AG04449 (cell line): ENCODE measurements at regions of chr6 and their contacts with region 1.

Region 1: DNA sequence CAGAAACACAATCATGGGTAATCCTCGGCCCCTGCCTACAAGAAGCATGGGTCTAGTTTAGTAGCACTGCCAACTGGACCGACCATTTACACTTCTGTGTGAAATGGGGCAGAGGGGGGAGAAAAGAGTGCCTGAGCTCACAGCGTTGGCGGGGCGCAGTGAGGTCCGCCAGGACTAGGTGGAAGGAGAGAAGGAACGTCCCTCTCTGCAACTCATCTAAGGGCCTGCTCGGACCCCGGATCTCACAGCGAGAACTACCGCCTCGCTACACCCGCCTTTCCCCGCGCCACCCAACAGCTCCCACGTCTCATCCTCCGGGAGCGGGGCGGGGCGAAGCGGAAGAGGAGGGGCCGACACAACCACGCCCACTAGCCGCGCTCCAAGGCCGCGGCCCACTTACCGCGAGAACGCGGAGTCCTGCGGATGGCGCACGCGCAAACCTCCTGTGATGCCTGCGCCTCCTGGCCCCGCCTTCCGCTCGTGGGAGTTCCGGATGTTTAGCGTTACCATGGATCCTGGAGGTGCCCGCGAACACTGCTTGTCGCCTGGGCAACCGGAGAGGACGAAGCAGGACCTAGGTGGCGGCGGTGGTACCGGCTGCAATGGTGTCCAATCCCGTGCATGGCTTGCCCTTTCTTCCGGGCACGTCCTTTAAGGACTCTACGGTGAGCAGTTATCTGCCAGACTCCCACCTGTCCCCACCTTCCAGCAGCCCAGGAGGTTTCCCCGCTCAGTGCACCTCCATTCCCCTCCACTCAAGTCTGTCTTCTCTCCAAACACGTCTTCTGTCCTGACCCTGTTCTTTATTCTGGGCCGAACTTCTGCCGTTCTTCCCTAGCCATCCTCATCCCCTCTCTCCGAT is at the start of gene EFHC1:
- DNase-seq: peak; percentile 79
- H3K4me3 ChIP-seq: peak within 1 kb of the TSS; percentile 74
- CTCF ChIP-seq: no peak

Region 2: DNA sequence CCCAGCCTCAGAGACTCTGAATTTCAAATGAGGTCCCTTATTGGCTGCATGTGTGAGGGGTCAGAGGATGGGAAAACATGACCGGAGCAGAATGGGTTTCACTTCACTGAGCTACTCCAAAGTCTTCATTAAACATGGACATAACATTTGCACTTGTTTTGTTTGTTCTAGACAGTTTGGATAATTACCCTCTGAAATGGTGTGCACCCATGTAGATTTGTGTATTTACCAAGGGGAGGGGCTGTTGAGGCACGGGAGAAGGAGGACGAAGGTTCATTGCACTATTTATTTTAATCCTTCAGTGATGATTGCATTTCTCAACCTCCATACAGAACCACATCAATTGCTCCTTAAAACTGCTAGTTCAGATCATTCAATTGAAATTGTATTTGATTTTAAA is 1237.2 kb before region 1 on chr6:
- CTCF ChIA-PET with region 1: no interaction called
- POLR2A ChIA-PET with region 1: no interaction called
- DNase-seq: no peak
- H3K4me3 ChIP-seq: no peak overlapping the region
- CTCF ChIP-seq: no peak

Region 3: DNA sequence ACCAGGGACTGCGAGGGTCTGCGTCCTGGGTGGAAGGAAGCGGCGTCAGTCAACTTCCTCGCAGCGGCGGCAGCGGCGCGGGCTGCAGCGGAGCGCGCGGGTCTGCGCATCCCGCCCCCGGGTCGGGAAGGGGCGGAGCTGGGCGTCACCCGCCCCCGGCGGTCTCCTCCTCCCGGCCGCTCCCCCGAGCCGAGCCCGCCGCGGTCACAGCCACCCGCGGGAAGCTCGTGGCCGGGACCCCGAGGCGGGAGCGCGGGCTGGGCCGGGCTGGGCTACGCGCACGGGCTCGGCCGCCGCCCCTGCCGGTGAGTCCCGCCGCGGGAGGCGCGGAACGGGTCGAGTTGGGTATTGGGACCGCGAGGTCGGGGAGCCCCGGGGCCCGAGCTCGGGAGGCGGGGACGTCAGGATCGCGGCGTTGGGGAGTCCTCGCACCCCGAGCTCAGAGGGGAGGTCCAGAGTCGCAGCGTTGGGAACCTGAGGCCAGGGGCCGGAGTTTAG is 58.0 kb before region 1 on chr6 and contains the start of gene PAQR8:
- CTCF ChIA-PET with region 1: no interaction called
- POLR2A ChIA-PET with region 1: no interaction called
- DNase-seq: no peak
- H3K4me3 ChIP-seq: peak within 1 kb of the TSS; percentile 78
- CTCF ChIP-seq: no peak

Region 4: GRCh38 chr6:52399511-52400312 is 20.3 kb before region 1 on chr6:
- CTCF ChIA-PET with region 1: interaction called, 61 read pairs
- POLR2A ChIA-PET with region 1: no interaction called
- DNase-seq: no peak
- H3K4me3 ChIP-seq: no peak overlapping the region
- CTCF ChIP-seq: peak; percentile 76

Region 5: GRCh38 chr6:52493669-52494068 is 73.6 kb after region 1 on chr6:
- CTCF ChIA-PET with region 1: interaction called, 11 read pairs
- POLR2A ChIA-PET with region 1: interaction called, 3 read pairs
- DNase-seq: no peak
- H3K4me3 ChIP-seq: no peak overlapping the region
- CTCF ChIP-seq: no peak

Region 6: DNA sequence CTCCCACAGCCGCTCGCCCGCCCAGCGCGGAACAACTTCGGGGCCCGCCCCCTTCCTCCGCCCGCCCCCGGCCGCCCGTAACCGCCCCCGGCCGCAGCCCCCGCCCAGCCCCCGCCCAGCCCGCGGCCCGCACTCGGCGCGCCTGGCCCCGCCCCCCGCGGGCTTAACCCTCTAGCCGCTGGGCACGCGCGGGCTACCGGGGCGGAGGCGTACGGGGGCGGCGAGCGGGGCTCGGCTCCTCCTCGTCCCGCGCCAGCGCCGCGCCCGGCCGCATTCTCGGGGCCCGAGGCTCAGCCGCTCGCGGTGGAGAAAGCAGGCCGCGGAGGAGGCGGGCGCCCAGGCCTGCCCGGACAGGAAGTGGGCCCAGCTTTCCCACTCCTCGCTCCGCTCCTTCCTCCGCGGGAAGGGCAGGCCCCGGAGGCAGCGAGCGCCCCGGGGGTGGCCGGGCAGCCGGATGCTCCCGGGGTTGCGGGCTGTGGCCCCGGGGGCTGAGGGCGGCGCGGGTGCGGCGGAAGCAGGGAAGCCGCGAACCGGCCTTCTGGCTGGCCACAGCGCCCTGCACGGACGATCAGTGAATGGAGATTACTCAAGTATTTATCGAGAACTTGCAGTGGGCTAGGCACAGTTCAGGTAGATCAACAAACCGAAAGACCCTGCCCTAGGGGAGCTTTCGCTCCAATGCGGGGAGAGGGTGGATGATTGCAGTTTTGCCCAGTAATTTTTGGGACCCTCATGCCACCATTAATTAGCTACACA is 157.2 kb after region 1 on chr6 and contains the start of gene TRAM2:
- CTCF ChIA-PET with region 1: interaction called, 32 read pairs
- POLR2A ChIA-PET with region 1: interaction called, 7 read pairs
- DNase-seq: no peak
- H3K4me3 ChIP-seq: peak within 1 kb of the TSS; percentile 95
- CTCF ChIP-seq: no peak

Region 7: GRCh38 chr6:52598123-52598823 is 178.2 kb after region 1 on chr6:
- CTCF ChIA-PET with region 1: interaction called, 109 read pairs
- POLR2A ChIA-PET with region 1: interaction called, 7 read pairs
- DNase-seq: no peak
- H3K4me3 ChIP-seq: no peak overlapping the region
- CTCF ChIP-seq: peak; percentile 82

Region 8: DNA sequence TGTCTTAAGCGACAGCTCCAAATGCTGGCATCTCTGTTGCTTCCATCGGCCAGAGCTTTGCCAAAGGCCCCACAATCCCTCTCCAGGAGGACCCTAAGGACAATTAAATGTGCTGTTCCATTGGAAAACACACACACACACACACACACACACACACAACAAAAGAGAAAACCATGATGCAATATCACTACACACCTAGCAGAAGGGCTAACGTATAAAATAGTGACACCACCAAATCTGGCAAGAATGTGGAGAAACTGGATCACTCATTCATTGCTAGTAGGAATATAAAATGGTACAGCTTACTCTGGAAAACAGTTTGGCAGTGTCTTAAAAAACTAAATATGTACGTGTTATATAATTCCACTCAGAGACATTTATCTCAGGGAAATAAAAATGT is 237.8 kb after region 1 on chr6:
- CTCF ChIA-PET with region 1: interaction called, 141 read pairs
- POLR2A ChIA-PET with region 1: no interaction called
- DNase-seq: no peak
- H3K4me3 ChIP-seq: no peak overlapping the region
- CTCF ChIP-seq: no peak